B cell (primary cell): ENCODE measurements at regions of chr1 and their contacts with region 1.

Region 1: GRCh38 chr1:19390901-19391595 is 78.9 kb downstream of the SLC66A1 start:
- DNase-seq: peak; percentile 85
- ATAC-seq: peak; percentile 78
- H3K4me3 ChIP-seq: peak overlapping the region; percentile 1 to 50 (median 43)
- H3K4me3 Mint-ChIP-seq: peak overlapping the region; percentile 87
- H3K27ac ChIP-seq: peak overlapping the region; percentile 74 to 84
- H3K27ac Mint-ChIP-seq: peak overlapping the region; percentile 93
- H3K4me1 ChIP-seq: peaks cover 42 to 72% of the 10 kb centered on the region in 2 donors
- H3K4me1 Mint-ChIP-seq: peaks cover 77% of the 10 kb centered on the region
- H3K27me3 ChIP-seq: no peaks in the 10 kb centered on the region
- H3K27me3 Mint-ChIP-seq: no peaks in the 10 kb centered on the region
- CTCF ChIP-seq: peak; percentile 81

Region 2: DNA sequence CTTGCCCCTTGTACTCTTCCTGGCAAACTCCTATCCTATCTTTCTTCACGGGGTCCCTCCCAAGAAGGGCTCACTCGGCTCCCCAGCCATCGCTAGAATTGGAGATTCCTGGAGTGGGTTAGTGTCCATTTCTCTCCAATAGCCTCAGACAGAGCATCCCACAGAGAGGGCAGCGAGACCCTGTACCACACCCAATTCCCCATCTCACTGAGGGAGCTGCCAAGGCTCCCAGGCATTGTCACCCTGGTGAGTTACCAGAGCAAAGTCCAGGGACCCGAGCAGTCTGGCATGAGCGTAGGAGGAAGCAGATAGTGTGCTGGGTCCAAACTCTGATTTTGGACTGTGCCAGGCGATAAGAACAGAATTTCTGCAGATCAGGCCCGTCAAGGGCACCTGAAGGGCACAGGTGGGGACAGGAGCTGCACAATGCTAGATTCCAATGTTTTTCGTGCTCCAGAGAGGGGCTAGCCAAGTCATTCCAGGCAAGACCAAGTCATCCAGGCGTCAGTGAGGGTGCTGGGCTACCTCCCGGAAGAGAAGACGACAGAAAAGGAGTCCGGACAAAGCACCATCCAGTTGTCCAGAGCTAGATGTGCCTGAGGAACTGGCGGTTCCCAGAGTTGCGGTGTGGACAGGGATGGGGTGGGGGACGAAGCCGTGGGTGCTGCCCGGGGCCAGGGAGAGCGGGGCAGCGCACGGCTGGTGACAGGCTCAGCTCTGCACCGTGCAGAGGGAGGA is 117.8 kb before region 1 on chr1:
- CTCF ChIA-PET with region 1: no interaction called
- POLR2A ChIA-PET with region 1: no interaction called
- intact Hi-C with region 1: no loop called
- DNase-seq: no peak
- ATAC-seq: no peak
- H3K4me3 ChIP-seq: no peak overlapping the region
- H3K4me3 Mint-ChIP-seq: no peak overlapping the region
- H3K27ac ChIP-seq: no peak overlapping the region
- H3K27ac Mint-ChIP-seq: no peak overlapping the region
- H3K4me1 ChIP-seq: no peaks in the 10 kb centered on the region
- H3K4me1 Mint-ChIP-seq: peaks cover 4% of the 10 kb centered on the region
- H3K27me3 ChIP-seq: peaks cover 0 to 7% (median 3%) of the 10 kb centered on the region in 4 experiments
- H3K27me3 Mint-ChIP-seq: peaks cover 14% of the 10 kb centered on the region
- CTCF ChIP-seq: no peak

Region 3: DNA sequence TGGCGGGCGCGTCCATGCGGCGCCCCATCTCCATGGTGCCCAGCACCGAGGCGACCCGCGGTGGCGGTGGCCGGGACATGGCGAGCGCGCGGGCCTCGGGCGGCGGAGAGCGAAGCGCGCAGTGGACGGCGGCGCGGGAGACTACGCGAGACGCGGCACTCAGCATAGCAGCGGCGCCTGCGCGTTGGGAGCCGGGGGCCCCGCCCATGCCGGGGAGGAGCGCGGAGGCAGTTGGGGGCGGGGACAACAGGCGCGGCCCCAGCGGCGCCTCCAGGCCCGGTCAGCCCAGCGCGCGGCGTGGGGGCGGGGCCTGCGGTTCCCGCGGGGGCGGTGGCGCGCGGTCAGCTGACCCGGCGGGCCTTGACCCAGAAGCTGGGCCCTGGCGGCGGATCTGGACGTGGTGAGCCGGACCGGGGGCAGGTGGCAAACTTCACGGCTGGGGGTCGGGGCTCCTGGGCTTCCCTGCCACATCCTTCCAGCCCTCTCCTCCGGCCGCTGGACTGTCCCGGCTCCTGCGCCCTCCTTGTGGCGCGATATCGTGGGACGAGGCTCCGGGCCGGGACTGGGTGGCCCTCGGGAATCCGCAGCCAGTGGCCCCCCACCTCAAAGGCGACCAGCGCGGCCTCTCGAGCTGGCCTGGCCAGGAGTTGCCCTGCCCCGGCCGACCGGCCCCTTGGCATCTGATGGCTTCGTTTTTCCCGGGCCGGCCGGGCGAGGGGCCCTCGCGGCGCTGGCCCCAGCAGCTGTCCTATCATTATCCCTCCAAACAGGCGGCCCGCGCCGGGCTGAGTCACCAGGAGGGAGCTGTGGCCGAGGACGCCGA is 78.9 kb before region 1 on chr1 and contains the starts of genes AKR7A2 and SLC66A1:
- CTCF ChIA-PET with region 1: interaction called, 4 read pairs
- POLR2A ChIA-PET with region 1: interaction called, 4 read pairs
- intact Hi-C with region 1: loop called (anchors 2 kb)
- DNase-seq: peak; percentile 93
- ATAC-seq: peak; percentile 89
- H3K4me3 ChIP-seq: peak within 1 kb of the TSS; percentile 26 to 91 (median 79)
- H3K4me3 Mint-ChIP-seq: peak within 1 kb of the TSS; percentile 88
- H3K27ac ChIP-seq: peak within 1 kb of the TSS; percentile 65 to 90
- H3K27ac Mint-ChIP-seq: peak within 1 kb of the TSS; percentile 75
- H3K4me1 ChIP-seq: peaks cover 55 to 58% of the 10 kb centered on the region in 2 donors
- H3K4me1 Mint-ChIP-seq: peaks cover 57% of the 10 kb centered on the region
- H3K27me3 ChIP-seq: no peaks in the 10 kb centered on the region
- H3K27me3 Mint-ChIP-seq: no peaks in the 10 kb centered on the region
- CTCF ChIP-seq: no peak
- total RNA-seq, gene AKR7A2: 32.1 and 36.9 TPM in 2 replicates
- total RNA-seq, gene SLC66A1: 24.4 and 26.4 TPM in 2 replicates

Region 4: GRCh38 chr1:19330449-19331135 is 60.5 kb before region 1 on chr1:
- CTCF ChIA-PET with region 1: no interaction called
- POLR2A ChIA-PET with region 1: no interaction called
- intact Hi-C with region 1: no loop called
- DNase-seq: no peak
- ATAC-seq: no peak
- H3K4me3 ChIP-seq: no peak overlapping the region
- H3K4me3 Mint-ChIP-seq: no peak overlapping the region
- H3K27ac ChIP-seq: no peak overlapping the region
- H3K27ac Mint-ChIP-seq: no peak overlapping the region
- H3K4me1 ChIP-seq: no peaks in the 10 kb centered on the region
- H3K4me1 Mint-ChIP-seq: no peaks in the 10 kb centered on the region
- H3K27me3 ChIP-seq: no peaks in the 10 kb centered on the region
- H3K27me3 Mint-ChIP-seq: no peaks in the 10 kb centered on the region
- CTCF ChIP-seq: no peak

Region 5: DNA sequence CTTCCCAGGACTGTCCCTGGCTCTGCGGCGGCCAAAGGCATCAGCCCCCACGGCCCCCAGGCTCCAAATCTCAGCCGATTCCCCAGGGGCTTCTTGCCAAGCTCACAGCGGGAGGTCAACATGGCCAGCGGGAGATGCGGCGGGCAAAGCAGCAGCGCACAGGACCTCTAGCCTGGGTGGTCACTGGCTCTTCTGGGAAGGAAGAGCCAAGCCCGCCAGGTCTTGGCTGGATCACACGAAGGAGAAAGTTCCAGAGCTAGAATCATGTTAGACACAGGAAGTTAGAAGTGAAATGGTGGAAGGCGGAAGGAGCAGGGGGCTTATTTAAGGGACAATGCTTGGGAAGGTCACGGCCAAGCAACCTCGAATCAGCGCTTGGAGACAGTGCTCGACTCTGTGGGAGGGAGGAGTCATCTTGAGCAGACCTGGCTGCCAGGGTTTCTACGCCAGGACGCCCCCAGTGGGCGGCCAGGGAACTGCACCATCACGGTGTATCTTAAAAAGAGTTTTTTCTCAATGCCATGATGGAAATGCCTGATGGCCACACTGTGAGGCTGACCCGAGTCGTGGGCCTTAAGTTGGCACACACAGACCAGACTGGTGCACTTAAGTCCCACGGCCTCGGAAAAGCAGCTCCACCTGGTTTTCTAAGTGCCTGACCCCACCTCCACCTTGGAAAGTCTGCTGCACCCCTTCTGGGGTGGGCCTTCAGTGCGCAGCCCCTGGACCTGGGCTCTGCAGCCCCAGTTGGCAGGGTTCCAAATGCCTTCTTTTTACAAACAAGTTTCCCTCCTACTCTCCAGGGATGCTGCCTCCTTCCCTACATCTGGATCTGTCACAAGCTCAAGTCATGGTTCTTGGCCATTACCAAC is 49.6 kb before region 1 on chr1:
- CTCF ChIA-PET with region 1: interaction called, 4 read pairs
- POLR2A ChIA-PET with region 1: no interaction called
- intact Hi-C with region 1: loop called (anchors 5 kb)
- DNase-seq: peak; percentile 77
- ATAC-seq: peak; percentile 81
- H3K4me3 ChIP-seq: no peak overlapping the region
- H3K4me3 Mint-ChIP-seq: no peak overlapping the region
- H3K27ac ChIP-seq: no peak overlapping the region
- H3K27ac Mint-ChIP-seq: no peak overlapping the region
- H3K4me1 ChIP-seq: no peaks in the 10 kb centered on the region
- H3K4me1 Mint-ChIP-seq: peaks cover 1% of the 10 kb centered on the region
- H3K27me3 ChIP-seq: no peaks in the 10 kb centered on the region
- H3K27me3 Mint-ChIP-seq: no peaks in the 10 kb centered on the region
- CTCF ChIP-seq: peak; percentile 97

Region 6: DNA sequence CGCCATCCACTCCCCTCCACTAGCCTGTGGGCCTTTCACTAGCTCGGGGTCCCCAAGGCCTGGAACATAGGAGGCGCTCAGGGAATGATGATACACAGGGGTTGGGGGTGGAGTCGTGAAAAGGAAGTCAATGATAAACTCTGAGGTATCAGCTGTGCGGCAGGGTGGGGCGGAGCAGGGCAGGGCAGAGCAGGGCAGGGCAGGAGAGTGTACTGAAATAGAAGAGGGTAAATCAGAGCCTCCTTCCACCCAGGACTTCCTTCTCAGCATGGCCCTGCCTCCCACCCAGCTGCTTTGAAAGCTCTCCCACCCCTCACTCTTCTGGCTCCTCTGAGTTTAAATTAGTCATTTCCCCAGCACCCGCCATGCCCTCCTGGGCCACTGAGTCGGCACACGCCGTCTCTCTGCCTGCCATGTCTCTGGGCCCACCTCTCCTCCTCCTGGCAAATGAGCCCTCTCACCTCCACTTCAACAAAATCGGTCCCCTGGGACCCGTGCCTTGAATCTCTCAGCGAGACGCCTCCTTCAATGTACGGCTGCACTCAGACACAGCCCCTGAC is 77.4 kb after region 1 on chr1:
- CTCF ChIA-PET with region 1: interaction called, 9 read pairs
- POLR2A ChIA-PET with region 1: interaction called, 5 read pairs
- intact Hi-C with region 1: loop called (anchors 5 kb)
- DNase-seq: peak; percentile 81
- ATAC-seq: peak; percentile 80
- H3K4me3 ChIP-seq: peak overlapping the region; percentile 14 to 66 (median 38)
- H3K4me3 Mint-ChIP-seq: peak overlapping the region; percentile 84
- H3K27ac ChIP-seq: peak overlapping the region; percentile 79 to 83
- H3K27ac Mint-ChIP-seq: peak overlapping the region; percentile 97
- H3K4me1 ChIP-seq: peaks cover 78 to 95% of the 10 kb centered on the region in 2 donors
- H3K4me1 Mint-ChIP-seq: peaks cover 89% of the 10 kb centered on the region
- H3K27me3 ChIP-seq: no peaks in the 10 kb centered on the region
- H3K27me3 Mint-ChIP-seq: no peaks in the 10 kb centered on the region
- CTCF ChIP-seq: no peak

Region 7: GRCh38 chr1:19504796-19505692 is 114.0 kb after region 1 on chr1:
- CTCF ChIA-PET with region 1: no interaction called
- POLR2A ChIA-PET with region 1: interaction called, 3 read pairs
- intact Hi-C with region 1: loop called (anchors 5 kb)
- DNase-seq: no peak
- ATAC-seq: peak; percentile 19
- H3K4me3 ChIP-seq: peak overlapping the region in 1 of 5 experiments; percentile 1
- H3K4me3 Mint-ChIP-seq: peak overlapping the region; percentile 64
- H3K27ac ChIP-seq: peak overlapping the region; percentile 19 to 32
- H3K27ac Mint-ChIP-seq: peak overlapping the region; percentile 73
- H3K4me1 ChIP-seq: peaks cover 26 to 31% of the 10 kb centered on the region in 2 donors
- H3K4me1 Mint-ChIP-seq: peaks cover 45% of the 10 kb centered on the region
- H3K27me3 ChIP-seq: no peaks in the 10 kb centered on the region
- H3K27me3 Mint-ChIP-seq: no peaks in the 10 kb centered on the region
- CTCF ChIP-seq: no peak

Region 8: DNA sequence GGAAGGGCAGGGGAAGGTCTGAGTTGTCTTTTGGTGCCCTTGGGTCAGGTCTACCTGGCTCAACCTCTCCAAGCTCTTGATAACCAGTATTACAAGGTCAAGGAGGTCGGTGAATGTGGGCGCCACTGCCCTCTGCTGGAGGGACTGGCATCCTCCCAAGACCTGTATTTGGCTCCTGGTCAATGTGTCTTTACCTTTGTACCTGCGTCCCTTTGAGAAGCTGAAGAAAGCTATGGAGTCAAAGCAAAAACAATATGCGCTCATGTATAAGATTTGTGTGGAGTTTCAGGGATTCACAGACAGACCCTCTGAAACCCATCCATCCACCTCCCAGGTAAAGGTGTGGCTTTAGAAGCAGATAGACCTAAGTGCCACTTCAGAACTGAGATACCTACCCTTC is 191.3 kb after region 1 on chr1:
- CTCF ChIA-PET with region 1: interaction called, 77 read pairs
- POLR2A ChIA-PET with region 1: no interaction called
- intact Hi-C with region 1: loop called (anchors 1 kb)
- DNase-seq: peak; percentile 80
- ATAC-seq: peak; percentile 87
- H3K4me3 ChIP-seq: no peak overlapping the region
- H3K4me3 Mint-ChIP-seq: no peak overlapping the region
- H3K27ac ChIP-seq: no peak overlapping the region
- H3K27ac Mint-ChIP-seq: no peak overlapping the region
- H3K4me1 ChIP-seq: peaks cover 4 to 8% of the 10 kb centered on the region in 2 donors
- H3K4me1 Mint-ChIP-seq: peaks cover 8% of the 10 kb centered on the region
- H3K27me3 ChIP-seq: no peaks in the 10 kb centered on the region
- H3K27me3 Mint-ChIP-seq: peaks cover 7% of the 10 kb centered on the region
- CTCF ChIP-seq: peak; percentile 72

Region 9: GRCh38 chr1:19651141-19651737 is 260.2 kb after region 1 on chr1:
- CTCF ChIA-PET with region 1: interaction called, 7 read pairs
- POLR2A ChIA-PET with region 1: interaction called, 3 read pairs
- intact Hi-C with region 1: loop called (anchors 1 kb)
- DNase-seq: peak; percentile 57
- ATAC-seq: peak; percentile 48
- H3K4me3 ChIP-seq: no peak overlapping the region
- H3K4me3 Mint-ChIP-seq: no peak overlapping the region
- H3K27ac ChIP-seq: no peak overlapping the region
- H3K27ac Mint-ChIP-seq: no peak overlapping the region
- H3K4me1 ChIP-seq: peaks cover 0 to 6% of the 10 kb centered on the region in 2 donors
- H3K4me1 Mint-ChIP-seq: peaks cover 2% of the 10 kb centered on the region
- H3K27me3 ChIP-seq: peaks cover 0 to 16% (median 1%) of the 10 kb centered on the region in 4 experiments
- H3K27me3 Mint-ChIP-seq: peaks cover 28% of the 10 kb centered on the region
- CTCF ChIP-seq: peak; percentile 54